SK-N-SH (cell line): ENCODE measurements at regions of chr1 and their contacts with region 1.

Region 1: GRCh38 chr1:54950369-54951163 is 29.9 kb upstream of the TMEM61 start:
- DNase-seq: peak; percentile 76
- H3K4me3 ChIP-seq: no peak overlapping the region; a peak in 2 of 4 replicates
- H3K27ac ChIP-seq: peak overlapping the region in 1 of 2 experiments; percentile 54; a peak in 2 of 4 replicates
- H3K4me1 ChIP-seq: peaks cover 7 to 9% of the 10 kb centered on the region in 2 experiments; a peak in 2 of 4 replicates
- H3K27me3 ChIP-seq: no peaks in the 10 kb centered on the region
- CTCF ChIP-seq: peak; percentile 81
- EP300 ChIP-seq: no peak
- RAD21 ChIP-seq: peak; percentile 85

Region 2: DNA sequence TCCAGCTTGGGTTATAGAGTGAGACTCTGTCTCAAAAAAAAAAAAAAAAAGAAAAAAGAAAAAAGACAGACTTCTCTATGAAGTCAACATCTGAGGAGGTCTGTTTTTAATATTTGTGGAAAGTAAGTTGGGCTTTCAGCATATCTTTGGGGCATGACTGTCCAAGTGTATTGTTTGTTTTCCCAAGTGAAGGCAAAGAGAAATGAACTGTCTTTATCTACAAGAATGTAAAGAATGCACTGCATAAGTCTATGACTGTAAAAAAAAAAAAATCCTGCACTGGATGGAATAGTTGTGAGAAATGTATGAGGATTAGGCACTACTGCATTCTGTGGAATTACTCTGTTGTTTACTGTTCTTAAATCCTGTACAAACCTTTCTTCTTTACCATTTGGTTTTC is 15.7 kb before region 1 on chr1:
- CTCF ChIA-PET with region 1: interaction called, 36 read pairs
- POLR2A ChIA-PET with region 1: no interaction called
- DNase-seq: no peak
- H3K4me3 ChIP-seq: no peak overlapping the region
- H3K27ac ChIP-seq: peak overlapping the region; percentile 1 to 91; a peak in 3 of 4 replicates
- H3K4me1 ChIP-seq: peaks cover 0 to 38% of the 10 kb centered on the region in 2 experiments; a peak in 3 of 4 replicates
- H3K27me3 ChIP-seq: no peaks in the 10 kb centered on the region
- CTCF ChIP-seq: no peak
- EP300 ChIP-seq: peak in 1 of 2 experiments; percentile 45; a peak in 1 of 4 replicates
- RAD21 ChIP-seq: no peak

Region 3: GRCh38 chr1:54973205-54973921 is 22.8 kb after region 1 on chr1:
- CTCF ChIA-PET with region 1: interaction called, 42 read pairs
- POLR2A ChIA-PET with region 1: no interaction called
- DNase-seq: peak; percentile 65
- H3K4me3 ChIP-seq: no peak overlapping the region
- H3K27ac ChIP-seq: no peak overlapping the region
- H3K4me1 ChIP-seq: no peaks in the 10 kb centered on the region; a peak in 1 of 4 replicates
- H3K27me3 ChIP-seq: no peaks in the 10 kb centered on the region
- CTCF ChIP-seq: peak; percentile 43
- EP300 ChIP-seq: no peak
- RAD21 ChIP-seq: peak; percentile 61

Region 4: GRCh38 chr1:54987919-54988705 is 37.5 kb after region 1 on chr1:
- CTCF ChIA-PET with region 1: interaction called, 123 read pairs
- POLR2A ChIA-PET with region 1: interaction called, 3 read pairs
- DNase-seq: peak; percentile 84
- H3K4me3 ChIP-seq: no peak overlapping the region
- H3K27ac ChIP-seq: no peak overlapping the region; a peak in 1 of 4 replicates
- H3K4me1 ChIP-seq: peaks cover 0 to 11% of the 10 kb centered on the region in 2 experiments; a peak in 1 of 4 replicates
- H3K27me3 ChIP-seq: no peaks in the 10 kb centered on the region; the same call in 1 of the 2 replicates
- CTCF ChIP-seq: no peak
- EP300 ChIP-seq: no peak
- RAD21 ChIP-seq: no peak

Region 5: GRCh38 chr1:55007625-55008024 is 57.1 kb after region 1 on chr1:
- CTCF ChIA-PET with region 1: interaction called, 390 read pairs
- POLR2A ChIA-PET with region 1: no interaction called
- DNase-seq: no peak
- H3K4me3 ChIP-seq: no peak overlapping the region
- H3K27ac ChIP-seq: 0 out of 4 replicates have a peak overlapping the region, but pooled peaks of 1 of the 2 experiments have one; percentile 3
- H3K4me1 ChIP-seq: peaks cover 0 to 4% of the 10 kb centered on the region in 2 experiments; a peak in 1 of 4 replicates
- H3K27me3 ChIP-seq: no peaks in the 10 kb centered on the region
- CTCF ChIP-seq: no peak
- EP300 ChIP-seq: no peak
- RAD21 ChIP-seq: no peak

Region 6: DNA sequence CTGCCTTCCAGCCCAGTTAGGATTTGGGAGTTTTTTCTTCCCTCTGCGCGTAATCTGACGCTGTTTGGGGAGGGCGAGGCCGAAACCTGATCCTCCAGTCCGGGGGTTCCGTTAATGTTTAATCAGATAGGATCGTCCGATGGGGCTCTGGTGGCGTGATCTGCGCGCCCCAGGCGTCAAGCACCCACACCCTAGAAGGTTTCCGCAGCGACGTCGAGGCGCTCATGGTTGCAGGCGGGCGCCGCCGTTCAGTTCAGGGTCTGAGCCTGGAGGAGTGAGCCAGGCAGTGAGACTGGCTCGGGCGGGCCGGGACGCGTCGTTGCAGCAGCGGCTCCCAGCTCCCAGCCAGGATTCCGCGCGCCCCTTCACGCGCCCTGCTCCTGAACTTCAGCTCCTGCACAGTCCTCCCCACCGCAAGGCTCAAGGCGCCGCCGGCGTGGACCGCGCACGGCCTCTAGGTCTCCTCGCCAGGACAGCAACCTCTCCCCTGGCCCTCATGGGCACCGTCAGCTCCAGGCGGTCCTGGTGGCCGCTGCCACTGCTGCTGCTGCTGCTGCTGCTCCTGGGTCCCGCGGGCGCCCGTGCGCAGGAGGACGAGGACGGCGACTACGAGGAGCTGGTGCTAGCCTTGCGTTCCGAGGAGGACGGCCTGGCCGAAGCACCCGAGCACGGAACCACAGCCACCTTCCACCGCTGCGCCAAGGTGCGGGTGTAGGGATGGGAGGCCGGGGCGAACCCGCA is 88.9 kb after region 1 on chr1 and contains the start of gene PCSK9:
- CTCF ChIA-PET with region 1: interaction called, 12 read pairs
- POLR2A ChIA-PET with region 1: no interaction called
- DNase-seq: peak; percentile 73
- H3K4me3 ChIP-seq: peak within 1 kb of the TSS; percentile 9 to 20; a peak in 2 of 4 replicates
- H3K27ac ChIP-seq: no peak within 1 kb of the TSS
- H3K4me1 ChIP-seq: peaks cover 0 to 16% of the 10 kb centered on the region in 2 experiments; a peak in 1 of 4 replicates
- H3K27me3 ChIP-seq: peaks cover 58% of the 10 kb centered on the region
- CTCF ChIP-seq: no peak
- EP300 ChIP-seq: no peak
- RAD21 ChIP-seq: no peak
- polyA plus RNA-seq, gene PCSK9: 0.02 and 0.03 TPM in 2 replicates